ENCODE measurements at regions of chr18 and their contacts with region 1.

Region 1: DNA sequence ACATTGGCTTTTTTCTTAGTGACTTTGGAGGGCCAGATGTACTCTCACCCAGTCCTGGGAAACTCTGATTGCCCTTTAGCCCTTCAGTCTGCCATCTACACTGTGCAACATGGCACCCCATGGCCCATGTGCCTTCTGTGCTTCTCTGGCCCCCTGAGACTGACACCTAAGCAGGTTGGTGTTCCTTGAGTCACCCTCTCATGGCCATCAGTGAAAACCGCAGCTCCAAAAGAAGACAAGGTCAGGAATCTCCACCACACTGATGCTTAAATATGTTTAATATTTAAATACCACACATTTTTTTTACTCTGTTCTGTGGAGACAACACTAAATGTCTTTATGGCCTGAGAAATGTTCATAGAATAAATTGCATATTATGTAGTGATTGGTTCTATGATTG is 23.9 kb downstream of the DCC start:
- DNase-seq: no peak

Region 2: GRCh38 chr18:52422985-52423601 is 59.2 kb after region 1 on chr18:
- intact Hi-C with region 1: no loop called
- DNase-seq: no peak

Region 3: GRCh38 chr18:54052732-54053429 is 1689.0 kb after region 1 on chr18:
- intact Hi-C with region 1: loop called in 1 of 2 experiments (anchors 5 kb)
- DNase-seq: no peak

Measured in posterior vena cava (tissue), 2 donors.